ENCODE measurements at regions of chr19 and their contacts with region 1.

Region 1: GRCh38 chr19:33373701-33374421 is at the start of gene CEBPG:
- DNase-seq: peak in 1 of 2 experiments; percentile 58
- H3K4me3 ChIP-seq: peak within 1 kb of the TSS; percentile 95
- H3K27ac ChIP-seq: peak within 1 kb of the TSS; percentile 98
- H3K4me1 ChIP-seq: peaks cover 34% of the 10 kb centered on the region
- H3K27me3 ChIP-seq: no peaks in the 10 kb centered on the region
- CTCF ChIP-seq: no peak; the same call in 1 of the 2 replicates
- total RNA-seq, gene CEBPG: 31.0 and 33.4 TPM in 2 replicates

Region 2: DNA sequence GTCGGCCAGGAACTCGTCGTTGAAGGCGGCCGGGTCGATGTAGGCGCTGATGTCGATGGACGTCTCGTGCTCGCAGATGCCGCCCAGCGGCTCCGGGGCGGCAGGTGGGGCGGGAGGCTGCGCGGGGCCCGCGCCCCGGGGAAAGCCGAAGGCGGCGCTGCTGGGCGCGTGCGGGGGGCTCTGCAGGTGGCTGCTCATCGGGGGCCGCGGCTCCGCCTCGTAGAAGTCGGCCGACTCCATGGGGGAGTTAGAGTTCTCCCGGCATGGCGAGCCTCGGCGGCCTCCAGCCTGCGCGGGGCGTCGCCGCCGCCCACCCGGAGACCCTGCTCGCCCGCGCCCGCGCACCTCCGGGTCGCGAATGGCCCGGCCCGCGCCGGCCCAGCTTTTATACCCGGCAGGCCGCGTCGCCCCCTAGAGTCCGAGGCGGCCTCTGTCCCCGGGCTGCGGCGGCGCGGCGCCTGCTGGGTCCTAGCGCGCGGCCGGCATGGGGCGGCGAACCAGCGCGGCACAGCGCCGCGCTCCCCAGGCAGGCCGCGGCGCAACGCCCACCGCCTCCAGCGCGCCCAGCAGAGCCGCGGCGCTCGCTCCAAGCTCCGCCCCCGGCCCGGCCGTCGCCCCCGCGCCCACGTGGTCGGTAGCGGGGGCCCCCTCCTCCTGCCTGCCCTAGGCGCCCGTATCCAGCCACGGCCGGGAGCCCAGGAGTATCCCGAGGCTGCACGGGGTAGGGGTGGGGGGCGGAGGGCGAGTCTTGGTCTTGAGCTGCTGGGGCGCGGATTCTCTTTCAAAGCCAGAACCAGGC is 71.5 kb before region 1 on chr19 and contains the start of gene CEBPA:
- CTCF ChIA-PET with region 1: interaction called, 3 read pairs
- POLR2A ChIA-PET with region 1: no interaction called
- intact Hi-C with region 1: loop called (anchors 2 kb)
- DNase-seq: peak; percentile 64 to 90
- H3K4me3 ChIP-seq: peak within 1 kb of the TSS; percentile 91
- H3K27ac ChIP-seq: no peak within 1 kb of the TSS
- H3K4me1 ChIP-seq: peaks cover 35% of the 10 kb centered on the region
- H3K27me3 ChIP-seq: no peaks in the 10 kb centered on the region
- CTCF ChIP-seq: no peak
- total RNA-seq, gene CEBPA: 8.9 and 9.2 TPM in 2 replicates

Region 3: GRCh38 chr19:33332248-33332647 is 41.6 kb before region 1 on chr19:
- CTCF ChIA-PET with region 1: no interaction called
- POLR2A ChIA-PET with region 1: no interaction called
- intact Hi-C with region 1: no loop called
- DNase-seq: no peak
- H3K4me3 ChIP-seq: no peak overlapping the region
- H3K27ac ChIP-seq: no peak overlapping the region
- H3K4me1 ChIP-seq: no peaks in the 10 kb centered on the region
- H3K27me3 ChIP-seq: no peaks in the 10 kb centered on the region
- CTCF ChIP-seq: no peak

Region 4: DNA sequence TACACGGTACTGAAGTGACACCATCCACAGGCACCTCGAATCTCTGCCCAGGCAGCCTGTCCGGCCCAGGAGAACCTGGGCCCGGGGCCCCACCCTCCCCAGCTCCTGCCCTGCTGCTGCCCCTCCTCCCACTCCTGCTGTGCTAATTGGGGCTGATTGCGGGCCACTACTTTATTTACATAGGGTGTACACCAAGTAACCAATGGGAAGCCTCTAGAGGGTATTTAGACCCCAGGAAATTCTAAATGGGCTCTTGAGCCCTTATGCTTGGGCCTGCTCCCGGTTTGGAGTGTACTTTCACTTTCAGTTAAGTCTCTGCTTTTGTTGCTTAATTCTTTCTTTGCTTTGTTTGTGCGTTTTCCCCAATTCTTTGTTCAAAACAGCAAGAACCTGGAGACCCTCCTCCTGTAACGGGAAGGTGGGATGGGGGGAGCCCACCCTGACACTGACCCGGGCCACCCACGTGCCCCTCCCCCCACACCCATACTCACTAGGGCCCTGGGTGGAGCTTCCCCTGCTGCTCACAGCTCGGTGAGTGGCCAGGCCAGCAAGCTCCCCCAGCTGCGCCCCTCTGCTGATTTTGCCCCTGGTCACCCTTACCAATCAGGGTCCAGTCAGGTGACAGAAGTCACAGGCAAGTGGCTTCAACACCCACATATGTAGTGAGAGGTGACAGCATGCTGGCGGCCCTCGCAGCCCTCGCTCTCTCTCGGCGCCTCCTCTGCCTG is 1293.7 kb after region 1 on chr19:
- CTCF ChIA-PET with region 1: interaction called, 15 read pairs
- POLR2A ChIA-PET with region 1: no interaction called
- intact Hi-C with region 1: no loop called
- DNase-seq: peak in 1 of 2 experiments; percentile 25
- H3K4me3 ChIP-seq: peak overlapping the region; percentile 56; the same call in 1 of the 2 replicates
- H3K27ac ChIP-seq: no peak overlapping the region
- H3K4me1 ChIP-seq: no peaks in the 10 kb centered on the region
- H3K27me3 ChIP-seq: no peaks in the 10 kb centered on the region
- CTCF ChIP-seq: no peak